PC-3 (cell line): ENCODE measurements at regions of chr6 and their contacts with region 1.

Region 1: DNA sequence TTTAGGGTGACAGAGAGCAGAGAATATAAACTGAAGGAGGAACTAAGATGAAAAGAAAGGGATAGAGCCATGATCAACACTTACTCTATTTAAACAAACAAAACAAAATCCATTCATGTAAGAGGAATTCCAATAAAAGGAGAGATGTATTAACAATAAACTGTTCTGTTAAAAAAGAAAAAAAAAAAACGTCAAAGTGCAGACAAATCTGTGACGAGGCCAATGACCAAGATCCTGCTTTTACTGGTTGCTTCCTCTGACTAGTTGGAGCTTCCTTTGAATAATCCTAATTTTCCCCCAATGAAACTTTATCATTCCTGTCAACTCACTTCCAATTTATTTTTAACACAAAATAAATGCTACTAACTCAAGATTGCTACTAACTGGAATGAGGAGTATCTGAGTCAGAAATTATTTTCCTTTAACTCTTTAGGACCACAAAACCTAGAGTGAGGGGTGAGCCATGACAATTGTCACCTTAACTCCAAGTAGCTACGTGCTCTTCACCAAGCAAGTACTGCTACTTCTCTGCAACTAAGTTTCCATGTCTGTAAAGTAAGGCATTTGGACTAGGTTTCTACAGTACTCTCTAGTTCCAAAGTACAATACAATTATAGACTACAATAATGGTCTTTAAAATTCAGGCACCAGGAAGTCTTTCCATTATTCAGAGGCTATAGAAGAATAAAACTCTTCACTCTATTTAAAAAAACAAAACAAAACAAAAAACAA is 152.0 kb downstream of the PTPRK start:
- DNase-seq: peak; percentile 81
- ATAC-seq: peak; percentile 75
- H3K4me3 ChIP-seq: peak overlapping the region; percentile 49
- H3K27ac ChIP-seq: peak overlapping the region; percentile 91
- H3K4me1 ChIP-seq: peaks cover 59% of the 10 kb centered on the region
- H3K27me3 ChIP-seq: no peaks in the 10 kb centered on the region
- CTCF ChIP-seq: no peak

Region 2: DNA sequence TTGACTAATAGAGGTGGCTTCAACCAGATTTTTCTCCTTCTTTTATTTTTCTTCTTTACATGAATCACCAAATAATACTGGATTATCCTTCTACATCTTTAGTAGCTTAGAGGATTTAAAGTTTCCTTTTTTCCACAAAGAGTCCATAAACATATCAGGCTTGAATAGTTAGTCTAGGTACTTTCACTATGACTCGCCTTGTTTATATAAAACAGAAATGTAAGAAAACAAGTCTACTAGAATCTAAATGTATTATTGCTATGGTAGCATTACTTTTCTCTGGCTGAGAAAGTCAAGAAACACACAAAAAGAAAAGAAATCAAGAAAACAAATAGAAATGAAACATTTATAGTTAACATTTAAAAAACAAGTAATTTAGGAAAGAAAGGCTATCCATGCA is 63.2 kb before region 1 on chr6:
- CTCF ChIA-PET with region 1: no interaction called
- POLR2A ChIA-PET with region 1: no interaction called
- intact Hi-C with region 1: no loop called
- DNase-seq: peak; percentile 8
- ATAC-seq: 0 out of 2 replicates have a peak, but pooled peaks have one; percentile 24
- H3K4me3 ChIP-seq: no peak overlapping the region
- H3K27ac ChIP-seq: no peak overlapping the region
- H3K4me1 ChIP-seq: peaks cover 7% of the 10 kb centered on the region; the same call in 1 of the 2 replicates
- H3K27me3 ChIP-seq: no peaks in the 10 kb centered on the region
- CTCF ChIP-seq: no peak

Region 3: DNA sequence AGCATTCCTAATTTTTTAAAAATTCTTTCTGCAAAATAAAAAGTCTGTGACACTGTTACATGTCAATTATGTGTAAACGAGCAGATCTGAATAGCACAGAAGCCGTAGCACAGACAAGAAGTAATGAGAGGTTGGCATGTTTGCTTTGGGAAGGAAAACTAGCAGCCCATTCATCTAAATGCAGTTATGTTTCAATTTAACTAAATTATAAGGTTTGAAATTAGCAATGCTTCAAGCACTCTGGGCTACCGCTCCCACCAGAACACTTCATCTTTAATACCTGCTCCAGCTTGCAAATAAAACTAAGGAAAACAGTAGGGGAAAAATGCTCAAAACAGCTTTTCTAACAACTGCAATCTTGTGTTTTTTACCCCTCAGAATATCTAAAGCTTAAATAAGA is 78.1 kb after region 1 on chr6:
- CTCF ChIA-PET with region 1: no interaction called
- POLR2A ChIA-PET with region 1: no interaction called
- intact Hi-C with region 1: no loop called
- DNase-seq: no peak
- ATAC-seq: no peak
- H3K4me3 ChIP-seq: no peak overlapping the region
- H3K27ac ChIP-seq: no peak overlapping the region
- H3K4me1 ChIP-seq: no peaks in the 10 kb centered on the region
- H3K27me3 ChIP-seq: no peaks in the 10 kb centered on the region
- CTCF ChIP-seq: no peak

Region 4: DNA sequence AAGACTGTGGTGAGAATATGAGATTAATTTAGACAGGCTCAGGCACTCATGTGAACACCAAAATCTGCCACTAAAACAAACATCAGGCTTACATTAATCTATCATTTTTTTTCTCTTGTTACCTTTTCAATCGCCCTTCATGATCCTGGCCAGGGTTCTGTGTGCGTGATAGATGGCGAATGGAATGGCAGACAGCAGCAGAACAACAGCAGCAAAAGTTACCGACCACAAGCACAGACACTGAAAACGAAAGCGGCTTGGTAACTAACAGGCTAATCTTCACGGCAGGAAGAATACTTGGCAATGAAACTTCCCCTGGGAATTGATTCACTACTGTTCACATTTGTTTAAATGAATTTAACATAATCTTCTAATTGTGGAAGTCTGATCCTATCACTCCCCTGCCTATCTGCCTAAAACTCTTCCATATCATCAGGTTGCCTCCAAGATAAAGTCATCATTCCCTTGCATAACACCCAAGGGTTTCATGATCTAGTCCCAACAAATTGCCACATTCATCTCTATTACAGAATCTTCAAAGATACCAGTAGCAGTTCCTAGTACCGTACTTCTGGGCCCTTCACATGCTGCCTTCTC is 123.3 kb after region 1 on chr6:
- CTCF ChIA-PET with region 1: no interaction called
- POLR2A ChIA-PET with region 1: no interaction called
- intact Hi-C with region 1: loop called (anchors 5 kb)
- DNase-seq: peak; percentile 37
- ATAC-seq: peak; percentile 36
- H3K4me3 ChIP-seq: peak overlapping the region; percentile 64
- H3K27ac ChIP-seq: peak overlapping the region; percentile 94
- H3K4me1 ChIP-seq: peaks cover 47% of the 10 kb centered on the region
- H3K27me3 ChIP-seq: no peaks in the 10 kb centered on the region
- CTCF ChIP-seq: no peak